ENCODE measurements at regions of chr4 and their contacts with region 1.

Region 1: DNA sequence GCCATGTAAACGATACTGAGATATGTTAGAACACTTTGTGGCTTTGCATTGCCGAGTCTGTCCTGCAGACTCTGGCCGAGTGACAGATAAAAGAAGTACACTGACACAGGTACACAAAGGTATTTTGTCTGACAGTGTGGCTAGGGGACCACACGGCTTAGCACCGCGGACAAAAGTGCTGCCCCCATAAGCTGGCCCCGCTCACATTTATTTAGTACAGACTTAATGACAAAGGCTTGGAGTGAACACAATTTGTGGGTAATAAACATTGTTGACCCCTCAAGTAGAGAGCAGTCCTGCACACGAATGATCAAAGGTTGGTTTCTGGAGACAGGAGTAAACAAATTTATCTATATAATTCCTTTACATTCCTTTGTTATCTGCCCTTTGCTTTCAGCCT is 976.8 kb downstream of the TRAM1L1 start:
- DNase-seq: peak; percentile 71 to 75
- H3K4me3 ChIP-seq: no peak overlapping the region
- H3K4me3 Mint-ChIP-seq: peak overlapping the region; percentile 62
- H3K27ac Mint-ChIP-seq: peak overlapping the region; percentile 85
- H3K4me1 ChIP-seq: peaks cover 30% of the 10 kb centered on the region
- H3K4me1 Mint-ChIP-seq: peaks cover 7% of the 10 kb centered on the region
- H3K27me3 ChIP-seq: no peaks in the 10 kb centered on the region
- H3K27me3 Mint-ChIP-seq: no peaks in the 10 kb centered on the region
- CTCF ChIP-seq: no peak

Region 2: DNA sequence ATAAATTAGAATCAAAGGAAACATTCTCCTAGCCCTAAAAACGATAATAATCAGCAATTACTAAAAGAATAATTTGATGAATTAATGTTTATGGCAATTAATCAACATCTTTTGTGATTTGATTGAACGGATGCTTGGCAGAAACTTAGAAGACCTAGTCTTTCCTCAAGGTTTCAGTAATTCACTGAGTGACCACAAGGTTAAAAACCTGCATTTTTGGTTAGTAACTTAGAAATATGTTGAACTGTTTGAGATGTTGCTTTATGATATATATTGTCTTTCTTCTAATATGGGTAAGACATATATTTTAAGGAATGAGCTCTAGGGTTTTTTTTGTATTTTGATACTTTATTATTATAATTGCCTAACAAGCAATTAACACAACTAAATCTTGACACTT is 202.2 kb before region 1 on chr4:
- CTCF ChIA-PET with region 1: no interaction called
- POLR2A ChIA-PET with region 1: no interaction called
- intact Hi-C with region 1: no loop called
- DNase-seq: no peak
- H3K4me3 ChIP-seq: no peak overlapping the region
- H3K4me3 Mint-ChIP-seq: no peak overlapping the region
- H3K27ac Mint-ChIP-seq: no peak overlapping the region
- H3K4me1 ChIP-seq: no peaks in the 10 kb centered on the region
- H3K4me1 Mint-ChIP-seq: no peaks in the 10 kb centered on the region
- H3K27me3 ChIP-seq: no peaks in the 10 kb centered on the region
- H3K27me3 Mint-ChIP-seq: no peaks in the 10 kb centered on the region
- CTCF ChIP-seq: no peak

Region 3: DNA sequence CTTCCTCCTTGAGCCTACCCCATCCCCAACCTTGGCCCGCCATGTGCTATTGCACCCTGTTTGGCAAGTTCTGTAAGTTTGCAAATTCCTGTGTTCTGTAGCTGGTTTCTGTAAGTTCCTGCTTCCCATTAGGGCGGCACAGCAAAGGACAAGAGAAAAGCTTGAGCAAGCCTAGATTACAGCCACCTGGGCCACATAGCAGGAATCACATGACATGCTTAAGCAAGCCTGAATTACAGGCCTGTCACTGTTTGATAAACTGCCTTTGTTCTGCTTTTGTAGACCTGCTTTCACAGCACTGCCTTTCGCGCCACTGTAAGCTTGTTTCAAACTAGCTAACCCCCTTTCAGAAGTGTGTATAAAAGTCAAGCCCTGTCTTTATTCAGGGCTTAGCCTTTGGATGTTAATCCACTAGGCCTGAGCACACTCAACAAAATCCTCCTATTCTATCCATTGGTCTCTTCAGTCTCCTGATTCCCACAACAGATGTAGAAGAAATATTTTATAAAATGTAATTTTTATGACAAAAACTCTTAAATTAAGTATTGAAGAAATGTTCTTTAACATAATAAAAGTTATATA is 88.4 kb before region 1 on chr4:
- CTCF ChIA-PET with region 1: no interaction called
- POLR2A ChIA-PET with region 1: no interaction called
- intact Hi-C with region 1: no loop called
- DNase-seq: no peak
- H3K4me3 ChIP-seq: no peak overlapping the region
- H3K4me3 Mint-ChIP-seq: no peak overlapping the region
- H3K27ac Mint-ChIP-seq: no peak overlapping the region
- H3K4me1 ChIP-seq: peaks cover 6% of the 10 kb centered on the region; the same call in 1 of the 2 replicates
- H3K4me1 Mint-ChIP-seq: no peaks in the 10 kb centered on the region
- H3K27me3 ChIP-seq: no peaks in the 10 kb centered on the region
- H3K27me3 Mint-ChIP-seq: no peaks in the 10 kb centered on the region
- CTCF ChIP-seq: no peak

Region 4: DNA sequence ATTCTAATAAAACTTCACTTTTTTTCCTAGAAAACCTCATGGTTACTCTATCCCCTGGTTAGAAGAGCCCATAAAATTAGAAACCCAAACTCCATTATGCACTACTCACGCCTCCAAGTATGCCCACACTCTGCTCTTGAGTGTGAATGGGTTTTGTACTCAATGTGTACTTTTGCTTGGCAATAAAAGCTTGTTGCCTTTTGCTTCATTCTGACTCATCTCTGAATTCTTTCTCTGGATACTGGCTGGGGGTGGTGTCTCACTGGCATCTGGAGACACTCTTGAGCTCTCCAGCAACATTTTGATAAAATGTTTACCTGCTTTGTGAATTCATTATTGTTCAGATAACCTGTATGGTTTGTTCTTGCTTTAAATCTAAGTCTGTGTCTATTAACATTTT is 13.5 kb after region 1 on chr4:
- CTCF ChIA-PET with region 1: no interaction called
- POLR2A ChIA-PET with region 1: no interaction called
- intact Hi-C with region 1: loop called (anchors 2 kb)
- DNase-seq: peak in 1 of 2 experiments; percentile 16
- H3K4me3 ChIP-seq: no peak overlapping the region
- H3K4me3 Mint-ChIP-seq: no peak overlapping the region
- H3K27ac Mint-ChIP-seq: peak overlapping the region; percentile 69
- H3K4me1 ChIP-seq: peaks cover 6% of the 10 kb centered on the region; the same call in 1 of the 2 replicates
- H3K4me1 Mint-ChIP-seq: peaks cover 19% of the 10 kb centered on the region
- H3K27me3 ChIP-seq: no peaks in the 10 kb centered on the region
- H3K27me3 Mint-ChIP-seq: no peaks in the 10 kb centered on the region
- CTCF ChIP-seq: no peak

Region 5: DNA sequence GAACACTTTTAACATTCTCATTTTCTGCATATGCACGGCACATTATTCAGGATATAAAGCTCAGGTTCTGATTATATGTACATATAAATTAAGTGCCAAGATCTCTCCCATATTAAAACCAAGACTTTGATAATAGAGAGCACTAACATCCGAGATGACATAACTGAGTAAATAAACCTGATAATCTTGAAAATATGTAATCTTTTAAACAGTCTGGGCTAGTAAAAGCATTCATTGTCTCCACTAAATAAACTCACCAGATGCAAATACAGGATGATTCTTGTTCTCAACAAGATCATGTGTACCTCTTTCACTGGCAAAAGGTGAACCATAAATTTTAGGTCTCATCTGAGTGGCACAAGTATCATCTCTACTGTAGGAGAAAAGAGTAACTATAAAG is 34.6 kb after region 1 on chr4:
- CTCF ChIA-PET with region 1: no interaction called
- POLR2A ChIA-PET with region 1: no interaction called
- intact Hi-C with region 1: loop called (anchors 2 kb)
- DNase-seq: no peak
- H3K4me3 ChIP-seq: no peak overlapping the region
- H3K4me3 Mint-ChIP-seq: no peak overlapping the region
- H3K27ac Mint-ChIP-seq: no peak overlapping the region
- H3K4me1 ChIP-seq: peaks cover 12% of the 10 kb centered on the region
- H3K4me1 Mint-ChIP-seq: peaks cover 6% of the 10 kb centered on the region
- H3K27me3 ChIP-seq: no peaks in the 10 kb centered on the region
- H3K27me3 Mint-ChIP-seq: no peaks in the 10 kb centered on the region
- CTCF ChIP-seq: no peak

Measured in Caco-2 (cell line).